Calu3 (cell line): ENCODE measurements at regions of chr10 and their contacts with region 1.

Region 1: GRCh38 chr10:94402015-94402842 is at the start of gene TBC1D12:
- DNase-seq: peak; percentile 91
- H3K4me3 Mint-ChIP-seq: peak within 1 kb of the TSS; percentile 77
- H3K27ac Mint-ChIP-seq: no peak within 1 kb of the TSS
- H3K4me1 Mint-ChIP-seq: peaks cover 8% of the 10 kb centered on the region
- H3K27me3 Mint-ChIP-seq: no peaks in the 10 kb centered on the region
- CTCF ChIP-seq: no peak
- total RNA-seq, gene TBC1D12: 5.8 and 6.1 TPM in 2 replicates

Region 2: GRCh38 chr10:94362360-94363250 is 39.6 kb before region 1 on chr10 and contains the start of gene NOC3L:
- CTCF ChIA-PET with region 1: interaction called, 4 read pairs
- intact Hi-C with region 1: loop called (anchors 2 kb)
- DNase-seq: peak; percentile 93
- H3K4me3 Mint-ChIP-seq: peak within 1 kb of the TSS; percentile 77
- H3K27ac Mint-ChIP-seq: peak within 1 kb of the TSS; percentile 67
- H3K4me1 Mint-ChIP-seq: peaks cover 13% of the 10 kb centered on the region
- H3K27me3 Mint-ChIP-seq: no peaks in the 10 kb centered on the region
- CTCF ChIP-seq: peak; percentile 61
- total RNA-seq, gene NOC3L: 18.4 and 21.8 TPM in 2 replicates